ENCODE measurements at regions of chr1 and their contacts with region 1.

Region 1: DNA sequence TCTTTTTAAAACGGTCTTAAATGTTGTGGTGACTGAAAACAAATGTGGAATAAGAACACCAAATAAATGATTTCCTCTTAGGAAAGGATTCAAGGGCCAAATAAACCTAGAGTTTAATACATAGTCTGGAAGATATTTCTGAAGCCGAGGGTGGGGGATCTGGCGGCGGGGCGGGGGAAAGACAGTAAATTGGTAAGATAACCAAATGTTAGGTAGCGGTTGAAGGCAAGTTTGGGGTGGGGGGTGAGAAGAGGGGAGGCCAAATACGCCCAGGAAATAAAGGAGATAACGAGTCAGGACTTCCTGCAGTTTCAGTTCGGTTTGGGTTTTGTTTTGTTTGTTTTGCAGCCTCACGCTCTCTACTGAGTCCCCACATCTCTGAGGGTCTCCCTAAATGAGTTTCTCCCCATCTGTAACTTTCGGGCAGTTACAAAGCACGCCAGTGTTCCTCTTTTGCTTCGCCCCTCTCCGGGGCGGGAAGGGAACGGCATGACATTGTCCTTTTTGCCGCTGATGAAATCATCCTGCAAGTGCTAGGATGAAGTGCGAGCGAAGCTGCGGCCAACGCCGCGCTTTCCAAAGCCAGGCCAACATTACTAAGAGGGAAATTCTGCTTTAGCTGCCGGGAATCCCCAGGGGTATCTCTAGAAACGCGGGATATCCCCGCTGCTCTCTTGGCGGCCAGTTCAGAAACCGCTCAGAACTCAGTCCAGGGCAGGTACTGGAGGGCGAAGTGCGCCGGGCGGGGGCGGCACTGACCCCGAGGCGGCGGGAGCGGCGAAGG is 844 bp downstream of the NIBAN1 start:
- H3K4me3 Mint-ChIP-seq: peak overlapping the region; percentile 92
- H3K27ac Mint-ChIP-seq: peak overlapping the region; percentile 92
- H3K4me1 Mint-ChIP-seq: peaks cover 60% of the 10 kb centered on the region
- H3K27me3 Mint-ChIP-seq: no peaks in the 10 kb centered on the region

Region 2: GRCh38 chr1:184004935-184005334 is 968.5 kb before region 1 on chr1:
- intact Hi-C with region 1: no loop called
- H3K4me3 Mint-ChIP-seq: no peak overlapping the region
- H3K27ac Mint-ChIP-seq: no peak overlapping the region
- H3K4me1 Mint-ChIP-seq: no peaks in the 10 kb centered on the region
- H3K27me3 Mint-ChIP-seq: no peaks in the 10 kb centered on the region

Region 3: GRCh38 chr1:184555665-184556641 is 417.5 kb before region 1 on chr1:
- intact Hi-C with region 1: no loop called
- H3K4me3 Mint-ChIP-seq: no peak overlapping the region
- H3K27ac Mint-ChIP-seq: no peak overlapping the region
- H3K4me1 Mint-ChIP-seq: peaks cover 9% of the 10 kb centered on the region
- H3K27me3 Mint-ChIP-seq: no peaks in the 10 kb centered on the region

Region 4: DNA sequence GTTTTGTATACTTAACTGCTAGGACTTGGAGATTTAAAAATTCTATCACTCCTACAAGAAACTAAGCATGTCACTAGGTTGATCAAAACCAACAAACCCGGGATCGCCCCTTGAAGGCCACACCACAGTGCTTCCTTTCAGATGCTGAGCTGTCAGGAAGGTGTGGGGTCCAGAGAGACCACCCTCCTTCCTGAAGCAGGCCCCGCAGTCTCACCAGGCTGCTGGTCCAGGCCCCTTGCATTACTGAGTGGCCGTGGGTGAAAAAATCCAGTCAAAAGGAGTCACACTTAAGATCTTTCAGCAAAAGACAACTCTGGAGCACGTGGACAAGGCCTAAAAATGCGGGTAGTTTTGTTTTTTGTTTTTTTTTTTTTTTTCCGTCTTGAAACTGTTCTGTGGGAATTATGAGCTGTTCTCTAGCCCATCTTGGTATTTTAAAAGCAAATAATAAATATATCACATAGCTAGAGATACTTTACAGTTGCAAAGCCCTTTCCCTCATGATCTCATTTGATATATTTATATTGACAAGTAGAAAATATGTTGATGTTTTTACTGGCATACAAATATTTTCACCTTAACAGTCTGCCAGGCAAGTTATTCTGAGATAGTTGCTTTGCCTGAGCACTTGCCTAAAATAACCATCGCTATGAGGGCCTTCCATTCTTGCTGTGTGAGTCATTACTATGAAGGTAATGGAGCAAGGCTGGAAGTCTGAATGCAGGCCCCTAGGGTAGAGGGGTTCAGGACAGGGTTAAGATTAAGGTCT is 145.7 kb before region 1 on chr1:
- intact Hi-C with region 1: loop called (anchors 5 kb)
- H3K4me3 Mint-ChIP-seq: no peak overlapping the region
- H3K27ac Mint-ChIP-seq: no peak overlapping the region
- H3K4me1 Mint-ChIP-seq: peaks cover 45% of the 10 kb centered on the region
- H3K27me3 Mint-ChIP-seq: no peaks in the 10 kb centered on the region

Region 5: GRCh38 chr1:184878002-184878401 is 95.5 kb before region 1 on chr1:
- intact Hi-C with region 1: loop called (anchors 5 kb)
- H3K4me3 Mint-ChIP-seq: no peak overlapping the region
- H3K27ac Mint-ChIP-seq: no peak overlapping the region
- H3K4me1 Mint-ChIP-seq: peaks cover 54% of the 10 kb centered on the region
- H3K27me3 Mint-ChIP-seq: no peaks in the 10 kb centered on the region

Region 6: GRCh38 chr1:184905474-184905894 is 68.0 kb before region 1 on chr1:
- intact Hi-C with region 1: loop called (anchors 10 kb)
- H3K4me3 Mint-ChIP-seq: no peak overlapping the region
- H3K27ac Mint-ChIP-seq: peak overlapping the region; percentile 80
- H3K4me1 Mint-ChIP-seq: peaks cover 33% of the 10 kb centered on the region
- H3K27me3 Mint-ChIP-seq: no peaks in the 10 kb centered on the region

Region 7: GRCh38 chr1:184945029-184945428 is 28.4 kb before region 1 on chr1:
- intact Hi-C with region 1: loop called (anchors 2 kb)
- H3K4me3 Mint-ChIP-seq: no peak overlapping the region
- H3K27ac Mint-ChIP-seq: peak overlapping the region; percentile 85
- H3K4me1 Mint-ChIP-seq: peaks cover 53% of the 10 kb centered on the region
- H3K27me3 Mint-ChIP-seq: no peaks in the 10 kb centered on the region

Measured in dendritic cell treated with granulocyte-macrophage colony-stimulating factor and Interleukin-4, amounts not matched to agents 40 ng/mL and 50 ng/mL, for 4 days (primary cell).